Transverse colon (tissue), 4 donors: ENCODE measurements at regions of chr4 and their contacts with region 1.

Region 1: DNA sequence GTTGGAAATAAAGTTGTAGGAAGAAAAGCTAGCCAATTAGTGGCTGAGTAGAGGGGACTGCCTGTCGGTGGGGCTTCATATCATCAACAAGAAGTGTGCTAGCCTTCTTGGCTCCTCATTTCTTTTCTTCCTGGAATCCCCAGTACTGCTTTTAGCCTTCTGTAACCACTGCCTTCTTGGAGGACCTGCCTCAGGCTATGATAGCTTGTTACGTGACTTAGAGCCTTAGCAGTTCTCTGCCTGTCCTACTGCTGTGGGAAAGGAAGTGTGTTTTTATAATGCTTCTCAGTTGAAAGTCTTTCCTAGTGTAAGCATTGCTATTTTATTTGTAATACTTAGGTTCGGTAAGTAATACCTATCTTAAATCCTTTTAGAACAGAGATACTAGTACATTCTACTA is 61.9 kb downstream of the LARP1B start:
- DNase-seq: no peak
- H3K4me3 ChIP-seq: no peak overlapping the region
- H3K27ac ChIP-seq: no peak overlapping the region
- H3K4me1 ChIP-seq: no peaks in the 10 kb centered on the region
- H3K27me3 ChIP-seq: no peaks in the 10 kb centered on the region
- CTCF ChIP-seq: no peak
- EP300 ChIP-seq: no peak
- POLR2A ChIP-seq: no peak

Region 2: GRCh38 chr4:126583509-126583908 is 1539.5 kb before region 1 on chr4:
- in situ Hi-C with region 1: no loop called
- intact Hi-C with region 1: no loop called
- DNase-seq: no peak
- H3K4me3 ChIP-seq: no peak overlapping the region
- H3K27ac ChIP-seq: no peak overlapping the region
- H3K4me1 ChIP-seq: no peaks in the 10 kb centered on the region
- H3K27me3 ChIP-seq: no peaks in the 10 kb centered on the region
- CTCF ChIP-seq: no peak
- EP300 ChIP-seq: no peak
- POLR2A ChIP-seq: no peak

Region 3: DNA sequence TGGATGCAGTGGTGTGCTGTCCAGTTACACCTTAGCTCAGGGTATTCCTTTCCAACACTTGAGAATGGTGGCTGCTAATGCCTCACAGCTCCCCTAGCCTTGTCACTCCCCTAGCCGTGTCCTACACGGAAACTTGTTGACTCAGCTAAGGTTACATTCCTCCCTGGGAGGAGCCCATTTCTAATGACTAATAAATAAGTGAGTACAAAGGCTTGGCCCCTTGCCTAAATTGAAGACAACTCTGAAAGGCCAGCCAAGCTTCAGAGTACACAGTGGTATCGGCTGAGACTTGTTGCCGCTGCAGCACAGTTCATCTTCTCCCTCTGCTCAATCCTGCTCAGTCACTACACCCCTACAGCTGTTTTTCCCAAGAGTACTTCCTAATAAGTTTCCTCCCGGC is 414.1 kb before region 1 on chr4:
- in situ Hi-C with region 1: no loop called
- intact Hi-C with region 1: no loop called
- DNase-seq: no peak
- H3K4me3 ChIP-seq: no peak overlapping the region
- H3K27ac ChIP-seq: no peak overlapping the region
- H3K4me1 ChIP-seq: no peaks in the 10 kb centered on the region
- H3K27me3 ChIP-seq: no peaks in the 10 kb centered on the region
- CTCF ChIP-seq: no peak
- EP300 ChIP-seq: no peak
- POLR2A ChIP-seq: no peak

Region 4: DNA sequence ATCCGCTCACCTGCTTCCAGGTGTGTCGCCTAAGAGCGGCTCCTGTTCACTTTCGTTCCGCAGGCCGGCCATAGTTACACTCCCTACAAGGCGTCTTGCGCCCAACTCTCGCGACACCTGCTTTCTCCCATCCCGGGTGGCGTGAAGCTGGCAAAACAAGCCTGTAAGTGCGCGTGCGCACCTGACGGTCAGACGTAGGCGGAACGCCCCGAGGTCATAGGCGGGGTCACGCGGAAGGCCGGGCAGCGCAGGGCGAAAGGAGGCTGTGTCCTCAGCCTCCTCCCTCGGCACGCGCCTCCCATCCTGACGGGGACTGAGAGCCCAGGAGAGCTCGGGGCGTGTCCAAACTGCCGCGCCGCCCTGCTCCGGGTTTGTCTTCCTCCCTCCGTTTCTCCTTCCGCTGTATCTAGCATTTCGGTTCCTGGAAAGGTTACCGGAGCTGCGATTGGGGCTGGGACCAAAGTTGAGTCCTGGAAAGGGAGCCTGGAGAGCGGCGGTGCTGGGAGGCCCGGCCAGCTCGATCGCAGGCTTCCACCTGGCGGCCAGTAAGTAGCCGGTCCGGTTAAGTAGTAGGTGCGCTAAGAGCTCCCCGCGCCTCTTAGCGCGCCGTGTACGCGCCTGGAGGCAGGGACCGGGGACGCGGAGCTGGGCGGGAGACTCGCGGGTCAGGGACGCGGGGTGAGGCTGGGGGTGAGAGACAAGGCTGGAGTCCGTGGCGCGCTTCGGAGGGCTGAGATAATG is 157.8 kb before region 1 on chr4 and contains the starts of genes ABHD18 and MFSD8:
- in situ Hi-C with region 1: no loop called
- intact Hi-C with region 1: no loop called
- DNase-seq: peak; percentile 100
- H3K4me3 ChIP-seq: peak within 1 kb of the TSS; percentile 84 to 98 (median 92)
- H3K27ac ChIP-seq: peak within 1 kb of the TSS; percentile 97 to 99 (median 98)
- H3K4me1 ChIP-seq: peaks cover 4 to 31% (median 10%) of the 10 kb centered on the region in 4 donors
- H3K27me3 ChIP-seq: no peaks in the 10 kb centered on the region
- CTCF ChIP-seq: peak; percentile 40 to 79 (median 46)
- EP300 ChIP-seq: peak; percentile 9
- POLR2A ChIP-seq: peak; percentile 89
- total RNA-seq, gene ABHD18: 13.7 to 22.3 (median 16.0) TPM
- total RNA-seq, gene MFSD8: 26.6 to 50.5 (median 34.4) TPM

Region 5: DNA sequence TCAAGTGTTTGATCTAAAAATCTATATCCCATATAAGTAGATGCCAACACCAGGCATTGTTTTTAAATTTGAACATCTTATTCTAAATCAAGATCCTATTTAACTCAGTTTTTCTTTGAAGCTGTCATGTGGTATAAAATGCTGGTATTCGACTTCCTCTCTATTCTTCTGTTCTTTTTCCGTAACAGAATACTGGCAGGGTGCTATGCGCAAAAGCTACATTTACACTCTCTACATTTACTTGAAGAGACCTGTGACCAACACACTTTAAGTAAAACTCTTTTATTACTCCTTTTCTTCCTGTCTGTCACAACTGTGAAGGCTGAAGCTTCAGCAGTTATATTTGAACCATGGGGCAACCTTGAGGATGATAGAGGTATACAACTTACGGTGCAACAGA is 1585.7 kb after region 1 on chr4:
- in situ Hi-C with region 1: no loop called
- intact Hi-C with region 1: loop called (anchors 5 kb)
- DNase-seq: no peak
- H3K4me3 ChIP-seq: no peak overlapping the region
- H3K27ac ChIP-seq: no peak overlapping the region
- H3K4me1 ChIP-seq: no peaks in the 10 kb centered on the region
- H3K27me3 ChIP-seq: no peaks in the 10 kb centered on the region
- CTCF ChIP-seq: no peak
- EP300 ChIP-seq: no peak
- POLR2A ChIP-seq: no peak